CD8-positive, alpha-beta T cell (primary cell): ENCODE measurements at regions of chr6 and their contacts with region 1.

Region 1: GRCh38 chr6:32177788-32178546 is at the start of gene RNF5:
- DNase-seq: peak; percentile 84 to 100 (median 93)
- ATAC-seq: peak; percentile 83
- H3K4me3 ChIP-seq: peak within 1 kb of the TSS; percentile 72 to 82
- H3K4me3 Mint-ChIP-seq: peak within 1 kb of the TSS; percentile 93
- H3K27ac ChIP-seq: peak within 1 kb of the TSS; percentile 89 to 98
- H3K27ac Mint-ChIP-seq: peak within 1 kb of the TSS; percentile 96
- H3K4me1 ChIP-seq: peaks cover 59% of the 10 kb centered on the region
- H3K4me1 Mint-ChIP-seq: peaks cover 69% of the 10 kb centered on the region
- H3K27me3 ChIP-seq: no peaks in the 10 kb centered on the region
- H3K27me3 Mint-ChIP-seq: no peaks in the 10 kb centered on the region
- CTCF ChIP-seq: no peak
- total RNA-seq, gene RNF5: 10.0 to 11.5 TPM

Region 2: GRCh38 chr6:31665501-31666336 is 512.2 kb before region 1 on chr6 and contains the start of gene CSNK2B:
- CTCF ChIA-PET with region 1: no interaction called
- POLR2A ChIA-PET with region 1: no interaction called
- intact Hi-C with region 1: loop called in 1 of 2 experiments (anchors 5 kb)
- DNase-seq: peak; percentile 95 to 99 (median 98)
- ATAC-seq: peak; percentile 84
- H3K4me3 ChIP-seq: peak within 1 kb of the TSS; percentile 91 to 94
- H3K4me3 Mint-ChIP-seq: peak within 1 kb of the TSS; percentile 95
- H3K27ac ChIP-seq: peak within 1 kb of the TSS; percentile 96 to 99
- H3K27ac Mint-ChIP-seq: peak within 1 kb of the TSS; percentile 98
- H3K4me1 ChIP-seq: peaks cover 44% of the 10 kb centered on the region
- H3K4me1 Mint-ChIP-seq: peaks cover 56% of the 10 kb centered on the region
- H3K27me3 ChIP-seq: no peaks in the 10 kb centered on the region
- H3K27me3 Mint-ChIP-seq: no peaks in the 10 kb centered on the region
- CTCF ChIP-seq: no peak
- total RNA-seq, gene CSNK2B: 80.9 to 86.1 TPM

Region 3: GRCh38 chr6:32108094-32108627 is 69.8 kb before region 1 on chr6:
- CTCF ChIA-PET with region 1: no interaction called
- POLR2A ChIA-PET with region 1: no interaction called
- intact Hi-C with region 1: no loop called
- DNase-seq: no peak
- ATAC-seq: no peak
- H3K4me3 ChIP-seq: no peak overlapping the region
- H3K4me3 Mint-ChIP-seq: no peak overlapping the region
- H3K27ac ChIP-seq: no peak overlapping the region
- H3K27ac Mint-ChIP-seq: no peak overlapping the region
- H3K4me1 ChIP-seq: peaks cover 20% of the 10 kb centered on the region
- H3K4me1 Mint-ChIP-seq: peaks cover 26% of the 10 kb centered on the region
- H3K27me3 ChIP-seq: peaks cover 0 to 7% of the 10 kb centered on the region in 2 experiments
- H3K27me3 Mint-ChIP-seq: peaks cover 22% of the 10 kb centered on the region
- CTCF ChIP-seq: no peak

Region 4: DNA sequence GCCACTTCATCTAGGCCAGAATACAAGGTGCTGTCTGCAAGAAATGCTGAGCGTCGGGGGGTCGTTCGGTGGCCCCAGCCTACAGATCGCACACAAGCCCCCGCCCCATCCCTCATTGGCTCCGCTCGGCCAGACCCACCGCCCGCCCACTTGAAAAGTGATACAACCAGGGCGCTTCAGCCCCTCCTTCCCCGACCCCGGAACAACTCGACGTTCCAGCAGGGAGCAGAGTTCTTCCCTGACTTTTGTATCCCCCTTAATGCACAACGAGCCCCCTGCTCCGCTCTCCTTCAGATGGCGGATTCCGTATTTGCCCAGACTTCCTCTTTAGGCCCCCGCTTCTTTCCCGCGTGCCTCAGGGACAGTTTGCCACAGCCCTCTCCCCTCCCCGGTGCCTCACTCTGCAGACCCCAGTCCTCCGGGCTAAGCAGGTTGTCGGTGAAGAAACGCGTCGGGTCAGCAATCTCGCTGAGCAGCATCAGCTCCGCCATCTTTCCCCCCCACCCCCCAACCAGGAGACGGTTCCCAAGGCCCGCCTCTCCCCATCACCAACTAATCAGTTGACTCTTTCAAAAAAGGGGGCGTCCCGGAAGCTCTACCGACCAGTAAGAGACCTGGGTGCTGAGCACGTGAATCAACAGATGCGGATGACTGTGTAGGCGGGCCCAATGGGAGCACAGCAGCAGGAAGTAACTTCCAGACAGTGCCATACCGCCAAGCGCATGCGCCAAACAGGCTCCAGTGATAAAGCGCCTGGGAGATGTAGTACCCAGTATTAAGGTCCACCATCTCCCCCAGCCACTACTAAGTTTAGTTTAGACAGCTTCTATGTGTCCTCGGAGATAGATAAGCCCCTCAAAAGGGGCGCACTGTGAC is 50.0 kb before region 1 on chr6 and contains the start of gene ATF6B:
- CTCF ChIA-PET with region 1: interaction called, 4 read pairs
- POLR2A ChIA-PET with region 1: interaction called, 21 read pairs
- intact Hi-C with region 1: loop called (anchors 1 kb)
- DNase-seq: peak; percentile 90 to 100 (median 95)
- ATAC-seq: peak; percentile 94
- H3K4me3 ChIP-seq: peak within 1 kb of the TSS; percentile 81 to 88
- H3K4me3 Mint-ChIP-seq: peak within 1 kb of the TSS; percentile 99
- H3K27ac ChIP-seq: peak within 1 kb of the TSS; percentile 76 to 83
- H3K27ac Mint-ChIP-seq: peak within 1 kb of the TSS; percentile 97
- H3K4me1 ChIP-seq: peaks cover 31% of the 10 kb centered on the region
- H3K4me1 Mint-ChIP-seq: peaks cover 47% of the 10 kb centered on the region
- H3K27me3 ChIP-seq: no peaks in the 10 kb centered on the region
- H3K27me3 Mint-ChIP-seq: no peaks in the 10 kb centered on the region
- CTCF ChIP-seq: no peak
- total RNA-seq, gene ATF6B: 69.3 to 72.5 TPM

Region 5: GRCh38 chr6:32190054-32190851 is 12.3 kb after region 1 on chr6 and contains the start of gene PBX2:
- CTCF ChIA-PET with region 1: interaction called, 14 read pairs
- POLR2A ChIA-PET with region 1: interaction called, 95 read pairs
- intact Hi-C with region 1: loop called (anchors 1 kb)
- DNase-seq: peak; percentile 52 to 93 (median 86)
- ATAC-seq: peak; percentile 52
- H3K4me3 ChIP-seq: peak within 1 kb of the TSS; percentile 78 to 82
- H3K4me3 Mint-ChIP-seq: peak within 1 kb of the TSS; percentile 99
- H3K27ac ChIP-seq: peak within 1 kb of the TSS; percentile 73 to 97
- H3K27ac Mint-ChIP-seq: peak within 1 kb of the TSS; percentile 97
- H3K4me1 ChIP-seq: peaks cover 59% of the 10 kb centered on the region
- H3K4me1 Mint-ChIP-seq: peaks cover 64% of the 10 kb centered on the region
- H3K27me3 ChIP-seq: no peaks in the 10 kb centered on the region
- H3K27me3 Mint-ChIP-seq: no peaks in the 10 kb centered on the region
- CTCF ChIP-seq: no peak
- total RNA-seq, gene PBX2: 53.3 to 54.4 TPM

Region 6: GRCh38 chr6:32853541-32854375 is 675.8 kb after region 1 on chr6 and contains the starts of genes PSMB9 and TAP1:
- CTCF ChIA-PET with region 1: no interaction called
- POLR2A ChIA-PET with region 1: no interaction called
- intact Hi-C with region 1: loop called in 1 of 2 experiments (anchors 5 kb)
- DNase-seq: peak; percentile 83 to 99 (median 94)
- ATAC-seq: peak; percentile 78
- H3K4me3 ChIP-seq: peak within 1 kb of the TSS; percentile 85 to 99
- H3K4me3 Mint-ChIP-seq: peak within 1 kb of the TSS; percentile 99
- H3K27ac ChIP-seq: peak within 1 kb of the TSS; percentile 98
- H3K27ac Mint-ChIP-seq: peak within 1 kb of the TSS; percentile 100
- H3K4me1 ChIP-seq: peaks cover 62% of the 10 kb centered on the region
- H3K4me1 Mint-ChIP-seq: peaks cover 69% of the 10 kb centered on the region
- H3K27me3 ChIP-seq: no peaks in the 10 kb centered on the region
- H3K27me3 Mint-ChIP-seq: no peaks in the 10 kb centered on the region
- CTCF ChIP-seq: peak; percentile 89
- total RNA-seq, gene PSMB9: 32.9 to 34.7 TPM
- total RNA-seq, gene TAP1: 98.0 to 98.1 TPM